ENCODE measurements at regions of chr12 and their contacts with region 1.

Region 1: GRCh38 chr12:113152835-113153814 is 3.6 kb downstream of the CFAP73 start:
- DNase-seq: peak; percentile 92
- H3K4me3 ChIP-seq: peak overlapping the region; percentile 78
- H3K27ac ChIP-seq: peak overlapping the region; percentile 90
- H3K4me1 ChIP-seq: peaks cover 57% of the 10 kb centered on the region
- CTCF ChIP-seq: peak; percentile 79

Region 2: GRCh38 chr12:112900299-112901145 is 252.6 kb before region 1 on chr12:
- CTCF ChIA-PET with region 1: no interaction called
- POLR2A ChIA-PET with region 1: no interaction called
- intact Hi-C with region 1: loop called (anchors 5 kb)
- DNase-seq: peak; percentile 79
- H3K4me3 ChIP-seq: no peak overlapping the region
- H3K27ac ChIP-seq: peak overlapping the region; percentile 7
- H3K4me1 ChIP-seq: peaks cover 45% of the 10 kb centered on the region
- CTCF ChIP-seq: peak; percentile 85

Region 3: GRCh38 chr12:113098446-113098896 is 54.7 kb before region 1 on chr12:
- CTCF ChIA-PET with region 1: interaction called, 3 read pairs
- POLR2A ChIA-PET with region 1: interaction called, 4 read pairs
- intact Hi-C with region 1: loop called (anchors 2 kb)
- DNase-seq: peak; percentile 82
- H3K4me3 ChIP-seq: no peak overlapping the region
- H3K27ac ChIP-seq: peak overlapping the region; percentile 88
- H3K4me1 ChIP-seq: peaks cover 75% of the 10 kb centered on the region
- CTCF ChIP-seq: peak; percentile 91

Region 4: DNA sequence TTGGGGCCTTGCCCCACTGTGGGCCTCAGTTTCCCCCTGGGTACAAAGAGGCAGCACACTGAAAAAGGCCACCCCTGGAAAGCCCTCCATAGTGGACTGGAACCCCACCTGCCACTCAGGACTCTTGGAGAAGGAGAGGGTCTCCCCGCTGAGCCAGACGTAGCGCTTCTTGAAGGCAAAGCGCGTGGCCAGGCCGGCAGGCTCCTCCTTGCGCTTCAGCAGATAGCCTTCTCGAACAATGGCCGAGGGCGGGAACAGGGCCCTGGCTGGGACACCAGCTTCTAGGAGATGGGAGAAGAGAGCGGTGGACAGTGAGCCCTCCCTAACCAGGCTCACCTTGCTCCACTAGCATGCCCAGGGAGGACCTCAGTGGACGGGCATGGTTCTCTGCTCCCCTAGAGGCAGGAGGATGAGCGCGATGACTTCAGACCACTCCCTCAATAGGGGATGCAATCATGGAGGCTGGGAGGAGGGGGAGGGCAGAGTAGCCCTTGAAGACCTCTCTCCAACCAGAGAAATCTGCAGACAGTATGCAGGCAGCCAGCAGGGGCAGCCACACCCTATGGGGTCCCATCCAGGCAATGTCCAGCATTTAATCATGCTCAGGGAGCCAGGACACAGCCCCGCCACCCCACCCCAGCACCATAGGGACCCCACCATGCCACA is 47.4 kb before region 1 on chr12:
- CTCF ChIA-PET with region 1: interaction called, 3 read pairs
- POLR2A ChIA-PET with region 1: interaction called, 4 read pairs
- intact Hi-C with region 1: loop called (anchors 1 kb)
- DNase-seq: no peak
- H3K4me3 ChIP-seq: no peak overlapping the region
- H3K27ac ChIP-seq: peak overlapping the region; percentile 23
- H3K4me1 ChIP-seq: peaks cover 62% of the 10 kb centered on the region
- CTCF ChIP-seq: 0 out of 2 replicates have a peak, but pooled peaks have one; percentile 21

Region 5: DNA sequence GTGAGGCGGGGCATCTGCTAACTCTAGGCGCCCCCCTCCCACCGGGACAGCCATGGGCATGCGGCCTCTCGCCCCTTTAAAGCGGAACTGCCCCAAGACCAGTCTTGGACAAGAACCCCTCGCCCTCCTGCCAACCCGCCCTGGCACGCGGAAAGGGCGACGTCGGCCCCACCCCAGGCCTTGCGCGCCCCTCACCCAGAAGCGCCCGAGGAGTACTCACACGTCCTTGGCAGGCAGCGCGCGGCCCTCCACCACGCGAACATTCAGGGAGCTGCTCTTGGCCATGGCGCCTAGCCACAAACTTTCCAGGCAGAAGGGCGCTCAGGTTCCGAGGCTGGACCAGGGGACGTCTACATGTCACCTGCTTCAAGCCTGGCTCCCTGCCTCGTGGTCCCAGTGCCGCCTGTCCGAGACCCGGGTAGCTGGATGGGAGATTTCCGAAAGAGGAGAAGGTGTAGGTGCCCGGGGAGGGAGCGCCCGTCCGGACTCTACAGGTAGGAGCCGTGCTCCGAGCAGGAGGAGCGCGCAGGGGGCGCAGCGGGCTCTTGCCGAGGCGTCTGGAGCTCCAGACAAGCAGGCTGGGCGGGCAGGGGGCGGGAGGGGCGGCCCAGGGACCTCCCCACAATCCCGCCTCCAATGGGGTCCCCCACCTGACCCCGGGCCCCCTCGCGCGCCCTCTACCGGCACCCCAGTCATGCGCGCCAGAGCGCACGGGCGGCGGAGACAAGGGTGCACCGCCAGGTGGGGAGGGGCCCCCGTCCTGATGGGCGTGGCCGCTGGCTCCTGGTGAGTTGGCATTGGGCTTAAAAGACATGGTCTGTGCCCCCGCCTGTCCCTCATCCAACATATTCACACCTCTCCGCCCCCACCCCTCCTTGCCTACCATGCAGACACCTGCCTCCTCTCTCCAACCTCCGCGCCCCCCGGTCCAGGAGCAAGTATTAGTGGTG is 17.7 kb before region 1 on chr12 and contains the start of gene RASAL1:
- CTCF ChIA-PET with region 1: interaction called, 24 read pairs
- POLR2A ChIA-PET with region 1: interaction called, 33 read pairs
- intact Hi-C with region 1: no loop called
- DNase-seq: peak; percentile 93
- H3K4me3 ChIP-seq: peak within 1 kb of the TSS; percentile 90
- H3K27ac ChIP-seq: peak within 1 kb of the TSS; percentile 68
- H3K4me1 ChIP-seq: peaks cover 68% of the 10 kb centered on the region
- CTCF ChIP-seq: peak; percentile 78
- total RNA-seq, gene RASAL1: 69.1 and 89.1 TPM in 2 replicates

Measured in OCI-LY7 (cell line).